Cardiac septum (tissue), 1 donor: ENCODE measurements at regions of chr15 and their contacts with region 1.

Region 1: DNA sequence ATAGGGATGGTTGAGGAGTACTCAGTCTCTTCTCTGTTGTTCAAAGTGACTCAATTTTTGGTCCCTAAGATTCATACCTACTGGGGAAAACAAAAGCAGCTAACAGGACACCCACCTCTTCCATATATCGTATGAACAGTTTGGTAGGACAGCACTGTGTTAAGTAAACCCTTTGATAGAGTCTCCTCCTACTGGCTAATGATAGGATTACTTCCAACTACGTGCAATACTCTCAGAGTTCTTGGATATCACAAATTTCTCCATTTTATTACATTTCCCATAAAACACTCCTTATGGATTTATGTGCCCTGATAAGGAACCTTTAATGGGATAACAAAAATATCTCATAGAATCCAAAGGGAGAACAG is 200.2 kb upstream of the GOLGA6L4 start:
- DNase-seq: no peak

Region 2: DNA sequence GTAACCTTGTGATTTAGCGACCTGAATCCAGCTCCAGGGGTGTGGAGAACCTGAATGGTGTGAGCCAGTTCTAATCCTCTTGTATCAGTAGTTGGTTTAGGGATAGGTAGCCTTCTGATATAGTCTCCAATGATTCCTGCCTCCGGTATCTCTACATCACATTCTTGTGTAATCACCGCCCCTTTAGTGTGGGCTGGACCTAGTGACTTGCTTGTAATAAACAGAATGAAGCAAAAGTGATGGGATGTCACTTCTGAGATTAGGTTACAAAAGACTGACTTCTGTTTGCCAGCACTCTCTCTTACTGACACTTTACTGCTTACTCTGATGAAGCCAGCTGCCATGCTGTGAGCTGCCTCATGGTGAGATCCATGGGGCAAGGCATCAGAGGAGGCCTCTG is 891.2 kb before region 1 on chr15:
- intact Hi-C with region 1: no loop called
- DNase-seq: no peak

Region 3: GRCh38 chr15:83734487-83734886 is 300.9 kb before region 1 on chr15:
- intact Hi-C with region 1: loop called (anchors 10 kb)
- DNase-seq: no peak

Region 4: DNA sequence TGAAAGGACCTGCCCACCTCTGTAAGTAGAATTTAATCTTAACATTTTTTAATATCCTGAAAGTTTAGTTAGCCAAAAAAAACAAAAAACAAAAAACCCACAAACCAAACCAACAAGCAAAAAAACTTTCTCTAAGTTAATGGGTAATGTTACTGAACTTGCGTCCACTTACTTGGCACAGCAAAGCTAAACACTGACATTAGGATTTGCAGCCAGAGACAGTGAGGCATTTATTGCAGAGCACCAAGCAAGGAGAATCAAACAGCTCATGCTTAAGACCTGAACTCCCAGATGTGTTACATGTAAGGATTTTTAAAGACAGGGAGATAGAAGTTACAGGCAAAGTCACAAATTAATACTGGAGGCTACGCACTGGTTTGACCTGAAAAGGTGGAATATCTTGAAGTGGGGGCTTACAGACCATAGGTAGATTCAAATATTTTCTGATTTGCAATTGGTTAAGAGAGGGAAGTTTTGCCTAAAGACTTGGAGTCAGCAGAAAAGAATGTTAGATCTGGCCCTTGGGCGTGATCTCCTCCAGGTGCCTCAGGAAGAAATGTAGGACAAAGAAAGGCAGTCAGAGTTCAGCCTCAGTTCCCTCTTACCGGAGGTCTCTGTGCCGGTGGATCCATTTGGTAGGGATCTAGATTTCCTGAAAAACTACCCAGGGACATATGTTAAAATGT is 176.4 kb before region 1 on chr15:
- intact Hi-C with region 1: no loop called
- DNase-seq: no peak